Mammary epithelial cell (primary cell): ENCODE measurements at regions of chr21 and their contacts with region 1.

Region 1: DNA sequence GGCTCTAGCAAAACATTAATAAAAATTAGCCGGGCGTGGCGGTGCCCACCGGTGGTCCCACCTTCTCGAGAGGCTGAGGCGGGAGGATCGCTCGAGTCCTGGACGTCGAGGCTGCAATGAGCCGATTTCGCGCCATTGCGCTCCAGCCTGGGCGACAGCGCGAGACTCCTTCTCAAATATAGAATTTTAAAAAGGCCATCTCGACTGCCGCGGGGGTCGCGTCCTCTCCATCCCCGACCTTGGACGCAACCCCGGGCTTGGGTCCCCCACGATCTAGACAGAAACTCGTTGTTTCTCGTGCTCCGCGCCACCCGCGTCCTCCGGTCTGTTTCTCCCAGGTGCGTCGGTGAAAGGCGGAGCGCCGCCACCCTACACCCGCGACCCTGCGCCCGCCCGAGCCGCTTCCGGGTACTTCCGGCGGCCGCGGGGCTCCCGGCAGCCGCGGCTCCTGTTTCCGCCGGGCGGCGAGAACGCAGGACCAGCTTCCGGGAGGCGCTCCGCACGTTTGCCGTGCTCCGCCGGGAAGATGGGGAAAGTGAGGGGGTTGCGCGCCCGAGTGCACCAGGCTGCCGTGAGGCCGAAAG is at the start of gene SLX9:
- DNase-seq: peak; percentile 81
- H3K4me3 ChIP-seq: peak within 1 kb of the TSS; percentile 80 to 95 (median 87)
- H3K27ac ChIP-seq: peak within 1 kb of the TSS; percentile 59
- H3K4me1 ChIP-seq: peaks cover 25% of the 10 kb centered on the region
- H3K27me3 ChIP-seq: no peaks in the 10 kb centered on the region
- CTCF ChIP-seq: no peak
- total RNA-seq, gene SLX9: 17.3 to 53.2 TPM

Region 2: DNA sequence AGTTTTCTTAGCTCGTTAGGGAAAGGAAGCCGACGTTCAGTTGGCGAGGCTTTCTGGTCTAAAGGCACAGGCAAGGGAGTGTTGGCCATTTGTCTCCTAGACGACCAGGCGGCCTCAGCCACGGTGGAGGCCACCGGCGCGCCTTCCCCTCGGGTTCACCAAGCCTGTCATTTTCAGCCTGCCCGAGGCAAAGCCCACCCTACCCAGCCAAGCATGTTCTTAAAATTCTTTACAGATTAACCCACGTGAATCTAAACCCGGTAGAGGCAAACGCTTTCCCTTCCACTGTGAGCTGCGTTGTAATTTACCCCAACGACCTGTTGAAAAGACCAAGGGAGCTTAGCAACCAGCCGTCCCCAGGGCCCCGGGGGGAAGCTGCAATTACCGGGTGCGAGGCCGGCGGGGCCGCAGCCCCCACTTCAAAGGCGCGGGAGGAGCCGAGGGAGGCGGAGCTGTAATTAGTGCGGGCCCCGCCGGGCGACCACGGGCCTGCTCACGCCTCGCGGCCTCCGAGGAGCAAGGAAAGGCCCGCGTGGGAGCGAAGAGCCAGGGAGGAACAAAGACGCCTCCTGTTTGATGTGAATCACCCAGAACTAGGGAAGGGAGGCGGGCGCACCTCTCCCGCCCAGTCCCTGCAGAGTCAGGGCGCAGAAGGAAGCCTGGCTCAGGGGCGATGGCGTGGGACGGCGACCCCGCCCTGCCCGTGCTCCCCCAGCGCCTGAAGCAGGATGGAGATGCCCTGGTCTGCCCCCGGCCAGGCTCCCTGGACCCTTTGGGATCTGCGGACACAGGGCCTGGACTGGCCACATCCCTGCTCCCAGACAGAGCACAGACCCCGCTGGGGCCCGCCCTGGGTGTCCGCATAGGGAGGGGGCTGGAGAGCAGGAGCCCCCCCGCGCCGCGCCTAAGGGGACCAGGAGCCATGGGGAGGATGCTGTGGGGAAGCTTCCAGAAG is 216.2 kb before region 1 on chr21:
- CTCF ChIA-PET with region 1: no interaction called
- dilution Hi-C with region 1: no loop called
- in situ Hi-C with region 1: no loop called
- intact Hi-C with region 1: no loop called
- DNase-seq: peak; percentile 22
- H3K4me3 ChIP-seq: no peak overlapping the region
- H3K27ac ChIP-seq: no peak overlapping the region
- H3K4me1 ChIP-seq: peaks cover 8% of the 10 kb centered on the region
- H3K27me3 ChIP-seq: peaks cover 7% of the 10 kb centered on the region
- CTCF ChIP-seq: no peak

Region 3: DNA sequence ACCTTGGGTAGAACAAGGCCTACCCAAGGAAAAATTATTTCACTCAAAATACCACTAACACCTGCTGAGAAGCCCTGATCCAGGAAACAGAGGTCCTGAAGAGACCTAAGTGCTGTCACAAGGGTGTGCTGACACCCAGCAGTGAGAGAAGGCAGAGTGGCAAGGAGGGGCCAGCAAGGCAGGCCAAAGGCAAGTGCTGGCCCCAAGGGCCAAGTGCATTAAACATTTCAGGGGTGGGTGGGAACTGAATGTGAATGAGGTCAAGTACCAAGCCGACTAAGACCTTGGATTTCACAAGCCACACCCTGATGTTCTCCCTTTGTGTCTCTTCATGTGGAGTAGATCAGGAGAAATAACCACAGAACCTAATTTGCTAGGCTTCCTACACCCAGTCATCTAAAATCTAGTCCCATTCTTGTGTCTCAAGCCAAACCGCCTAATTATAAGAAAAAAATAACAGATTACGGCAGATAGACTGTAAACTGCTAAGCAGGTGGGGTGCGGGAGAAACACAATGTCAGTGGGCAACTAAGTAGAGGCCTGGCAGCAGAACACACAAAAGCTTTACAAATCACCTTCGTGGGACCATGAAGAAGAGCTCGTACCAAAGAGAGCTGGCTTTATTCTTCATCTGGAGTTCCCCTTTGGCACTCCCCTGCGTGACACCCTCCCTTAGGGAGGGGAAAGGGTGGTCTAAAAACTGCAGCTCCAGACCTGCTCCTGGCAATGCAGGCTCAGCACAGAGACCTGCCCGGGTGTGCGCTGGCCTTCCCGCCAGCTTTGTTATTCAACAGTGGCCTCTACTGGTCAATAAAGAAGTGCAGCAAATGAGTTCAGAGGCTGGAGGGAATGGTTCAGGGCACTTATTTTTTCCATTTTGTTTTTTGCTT is 146.7 kb before region 1 on chr21:
- CTCF ChIA-PET with region 1: no interaction called
- dilution Hi-C with region 1: no loop called
- in situ Hi-C with region 1: loop called in 1 of 2 experiments (anchors 10 kb)
- intact Hi-C with region 1: no loop called
- DNase-seq: peak; percentile 51
- H3K4me3 ChIP-seq: no peak overlapping the region
- H3K27ac ChIP-seq: no peak overlapping the region
- H3K4me1 ChIP-seq: peaks cover 6% of the 10 kb centered on the region
- H3K27me3 ChIP-seq: no peaks in the 10 kb centered on the region
- CTCF ChIP-seq: peak; percentile 71 to 82

Region 4: GRCh38 chr21:44873356-44874239 is 66.0 kb before region 1 on chr21 and contains the start of gene PTTG1IP:
- CTCF ChIA-PET with region 1: no interaction called
- dilution Hi-C with region 1: no loop called
- in situ Hi-C with region 1: no loop called
- intact Hi-C with region 1: loop called (anchors 2 kb)
- DNase-seq: peak; percentile 97
- H3K4me3 ChIP-seq: peak within 1 kb of the TSS; percentile 71 to 86 (median 75)
- H3K27ac ChIP-seq: peak within 1 kb of the TSS; percentile 72
- H3K4me1 ChIP-seq: peaks cover 54% of the 10 kb centered on the region
- H3K27me3 ChIP-seq: no peaks in the 10 kb centered on the region
- CTCF ChIP-seq: no peak
- total RNA-seq, gene PTTG1IP: 131 to 269 TPM

Region 5: GRCh38 chr21:44880762-44881585 is 58.6 kb before region 1 on chr21:
- CTCF ChIA-PET with region 1: no interaction called
- dilution Hi-C with region 1: loop called (anchors 5 kb)
- in situ Hi-C with region 1: no loop called
- intact Hi-C with region 1: no loop called
- DNase-seq: peak; percentile 75
- H3K4me3 ChIP-seq: no peak overlapping the region
- H3K27ac ChIP-seq: peak overlapping the region; percentile 16
- H3K4me1 ChIP-seq: peaks cover 33% of the 10 kb centered on the region
- H3K27me3 ChIP-seq: no peaks in the 10 kb centered on the region
- CTCF ChIP-seq: no peak

Region 6: DNA sequence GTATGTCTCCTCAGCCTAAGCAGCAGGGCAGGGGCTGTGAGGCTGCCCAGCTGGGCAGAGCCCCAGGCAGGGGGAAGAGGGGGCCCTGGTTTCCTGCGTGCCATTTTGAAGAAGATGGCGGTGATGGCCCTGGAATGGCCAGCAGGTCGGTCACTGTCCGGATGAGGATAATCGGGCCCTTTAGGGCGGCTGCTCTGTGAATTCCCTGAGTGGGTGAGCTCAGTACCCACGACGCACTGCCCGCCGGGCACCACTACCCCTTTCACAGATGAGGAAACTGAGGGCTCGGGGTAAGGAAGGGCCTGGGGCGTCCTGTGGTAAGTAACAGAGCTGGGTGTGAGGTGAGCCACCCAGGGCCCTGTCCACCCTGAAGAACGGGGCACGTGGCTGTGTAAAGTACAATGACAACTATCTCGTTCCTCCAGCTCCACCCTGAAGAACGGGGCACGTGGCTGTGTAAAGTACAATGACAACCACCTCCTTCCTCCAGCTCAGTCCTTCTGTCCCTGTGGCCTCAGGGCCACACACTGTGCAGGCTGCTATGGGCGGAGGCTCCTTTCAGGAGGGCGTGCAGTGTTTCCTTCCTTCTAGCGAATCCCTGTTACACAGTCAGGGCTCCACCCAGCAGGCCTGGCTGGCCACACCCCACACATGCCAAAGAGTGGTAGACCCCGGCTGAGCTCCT is 42.2 kb before region 1 on chr21:
- CTCF ChIA-PET with region 1: no interaction called
- dilution Hi-C with region 1: no loop called
- in situ Hi-C with region 1: no loop called
- intact Hi-C with region 1: no loop called
- DNase-seq: no peak
- H3K4me3 ChIP-seq: no peak overlapping the region
- H3K27ac ChIP-seq: no peak overlapping the region
- H3K4me1 ChIP-seq: no peaks in the 10 kb centered on the region
- H3K27me3 ChIP-seq: no peaks in the 10 kb centered on the region
- CTCF ChIP-seq: no peak

Region 7: DNA sequence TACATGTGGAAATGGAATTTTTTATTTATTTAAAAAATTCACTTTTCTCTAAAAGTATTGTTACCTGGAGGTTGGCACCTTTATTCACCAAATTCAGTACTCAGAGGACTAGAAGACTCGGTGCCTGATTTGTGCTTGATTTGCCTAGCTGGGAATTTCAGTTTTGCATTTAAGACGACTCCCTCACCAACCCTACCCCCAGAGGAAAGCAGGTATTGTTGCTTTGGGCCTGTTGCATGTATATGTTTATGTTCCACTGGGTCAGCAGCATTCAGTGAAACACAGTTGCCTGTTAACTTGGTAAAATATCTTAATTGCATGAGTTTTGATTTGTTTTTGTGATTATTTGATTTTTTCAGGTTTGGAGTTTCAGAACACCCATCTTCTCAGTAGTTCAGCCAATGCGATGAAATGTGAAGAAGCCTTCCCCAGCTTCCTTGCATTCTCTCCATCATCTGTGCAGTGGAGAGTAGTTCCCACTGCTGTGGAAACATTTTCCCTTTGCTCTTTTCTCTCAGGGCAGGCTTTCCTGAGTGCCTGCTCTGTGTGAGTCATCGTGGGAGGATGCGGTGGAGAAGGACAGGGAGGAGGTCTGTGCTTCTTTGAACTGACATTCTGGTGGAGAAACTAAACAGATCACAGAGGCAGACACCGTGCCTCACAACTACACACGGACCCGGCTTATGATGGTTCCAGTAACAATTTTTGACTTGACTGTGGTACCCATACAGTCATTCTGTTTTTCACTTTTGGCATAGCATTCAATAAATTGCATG is 141.2 kb after region 1 on chr21:
- CTCF ChIA-PET with region 1: no interaction called
- dilution Hi-C with region 1: loop called (anchors 5 kb)
- in situ Hi-C with region 1: no loop called
- intact Hi-C with region 1: no loop called
- DNase-seq: no peak
- H3K4me3 ChIP-seq: no peak overlapping the region
- H3K27ac ChIP-seq: no peak overlapping the region
- H3K4me1 ChIP-seq: peaks cover 45% of the 10 kb centered on the region
- H3K27me3 ChIP-seq: no peaks in the 10 kb centered on the region
- CTCF ChIP-seq: no peak